Dorsolateral prefrontal cortex (tissue), 120 donors: ENCODE measurements at regions of chr16 and their contacts with region 1.

Region 1: GRCh38 chr16:70725912-70726828 is 40.3 kb upstream of the MTSS2 start:
- DNase-seq: peak in 9 of 10 donors; percentile 63 to 90 (median 85)
- H3K4me3 ChIP-seq: peak overlapping the region in 10 of 59 donors; percentile 4 to 27 (median 20)
- H3K27ac ChIP-seq: peak overlapping the region; percentile 34 to 93 (median 79)
- H3K27me3 ChIP-seq: no peaks in the 10 kb centered on the region
- CTCF ChIP-seq: peak in 10 of 56 donors; percentile 10 to 26 (median 16)

Region 2: DNA sequence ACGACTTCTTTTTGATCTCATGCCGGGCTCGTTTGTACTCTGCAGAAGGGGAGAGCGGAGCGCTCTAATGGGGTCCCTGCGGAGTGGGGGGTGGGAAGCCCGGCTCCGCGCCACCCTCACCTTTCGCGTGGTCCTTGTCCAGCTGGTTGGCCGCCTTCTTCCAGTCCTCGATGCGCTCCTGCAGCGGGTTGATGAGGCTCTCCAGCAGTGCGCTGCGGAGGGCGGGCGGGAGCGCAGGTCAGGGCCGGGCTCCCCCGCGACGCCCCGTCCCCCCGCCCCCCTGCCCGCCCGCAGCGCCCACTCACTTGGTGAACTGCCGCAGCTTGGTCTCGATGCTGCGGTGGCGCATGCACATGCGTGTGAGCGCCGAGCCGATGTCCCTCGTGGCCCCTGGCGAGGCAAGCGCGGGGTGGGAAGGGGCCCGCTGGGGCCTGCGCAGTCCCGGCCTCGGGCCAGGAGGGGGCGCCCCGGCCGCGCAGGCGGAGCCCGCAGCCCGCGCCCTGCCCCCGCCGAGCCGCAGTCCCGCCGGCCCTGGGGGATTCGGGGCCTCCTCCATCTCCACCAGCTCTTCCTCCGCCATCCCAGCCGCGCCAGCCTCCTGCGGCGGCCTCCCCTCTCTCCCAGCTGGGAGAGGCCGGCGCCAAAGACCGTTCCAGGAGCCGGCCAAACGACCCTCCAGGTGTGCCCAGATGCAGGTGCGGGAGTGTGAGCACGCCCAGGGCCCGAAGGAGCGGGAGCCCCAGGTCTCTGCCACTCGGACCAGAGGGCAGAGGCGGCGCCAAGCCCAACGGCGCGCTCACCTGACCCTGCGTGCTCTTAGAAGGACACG is 46.3 kb before region 1 on chr16:
- intact Hi-C with region 1: loop called (anchors 2 to 5 kb)
- DNase-seq: no peak
- H3K4me3 ChIP-seq: peak overlapping the region in 54 of 59 donors; percentile 11 to 89 (median 50)
- H3K27ac ChIP-seq: peak overlapping the region; percentile 48 to 98 (median 94)
- H3K27me3 ChIP-seq: no peaks in the 10 kb centered on the region
- CTCF ChIP-seq: peak in 51 of 56 donors; percentile 24 to 93 (median 64)

Region 3: GRCh38 chr16:70688246-70689000 is 37.7 kb before region 1 on chr16:
- intact Hi-C with region 1: loop called (anchors 2 to 5 kb)
- DNase-seq: peak; percentile 76 to 91 (median 86)
- H3K4me3 ChIP-seq: peak overlapping the region in 9 of 59 donors; percentile 1 to 38 (median 8)
- H3K27ac ChIP-seq: peak overlapping the region; percentile 81 to 99 (median 94)
- H3K27me3 ChIP-seq: no peaks in the 10 kb centered on the region
- CTCF ChIP-seq: peak in 10 of 56 donors; percentile 10 to 23 (median 16)

Region 4: GRCh38 chr16:70770626-70771552 is 44.7 kb after region 1 on chr16:
- intact Hi-C with region 1: no loop called
- DNase-seq: peak in 9 of 10 donors; percentile 49 to 82 (median 76)
- H3K4me3 ChIP-seq: no peak overlapping the region
- H3K27ac ChIP-seq: peak overlapping the region in 16 of 59 donors; percentile 2 to 67 (median 33)
- H3K27me3 ChIP-seq: no peaks in the 10 kb centered on the region
- CTCF ChIP-seq: peak; percentile 68 to 99 (median 96)